Naive thymus-derived CD4-positive, alpha-beta T cell (primary cell): ENCODE measurements at regions of chr1 and their contacts with region 1.

Region 1: DNA sequence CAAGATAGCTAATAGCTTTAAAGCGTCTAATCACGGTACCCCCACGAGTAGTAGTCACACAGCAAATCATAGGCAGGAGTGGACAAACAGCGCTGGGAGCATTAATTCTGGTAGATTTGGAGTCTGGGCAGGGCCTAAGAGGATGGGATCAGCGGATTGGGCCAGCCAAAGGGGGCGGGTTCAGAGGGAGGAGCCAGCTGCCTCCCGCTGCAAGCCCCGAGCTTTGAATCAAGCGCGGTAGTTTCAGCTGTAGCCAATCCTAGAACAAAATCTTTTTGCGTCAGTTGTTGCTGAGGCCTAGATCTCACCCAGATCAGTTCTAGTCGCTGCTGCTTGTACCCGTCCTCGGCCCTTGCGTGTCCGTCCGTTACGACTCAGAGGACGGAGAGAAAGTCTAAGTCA is 576 bp upstream of the NASP start:
- DNase-seq: peak; percentile 77 to 97 (median 95)
- ATAC-seq: peak; percentile 86
- H3K4me3 ChIP-seq: peak overlapping the region; percentile 98
- H3K4me3 Mint-ChIP-seq: peak overlapping the region; percentile 89 to 100 (median 99)
- H3K27ac ChIP-seq: peak overlapping the region; percentile 91
- H3K27ac Mint-ChIP-seq: peak overlapping the region; percentile 91 to 99 (median 98)
- H3K4me1 ChIP-seq: peaks cover 16 to 18% of the 10 kb centered on the region in 2 donors
- H3K4me1 Mint-ChIP-seq: peaks cover 20 to 37% (median 26%) of the 10 kb centered on the region in 7 donors
- H3K27me3 ChIP-seq: no peaks in the 10 kb centered on the region
- H3K27me3 Mint-ChIP-seq: no peaks in the 10 kb centered on the region

Region 2: DNA sequence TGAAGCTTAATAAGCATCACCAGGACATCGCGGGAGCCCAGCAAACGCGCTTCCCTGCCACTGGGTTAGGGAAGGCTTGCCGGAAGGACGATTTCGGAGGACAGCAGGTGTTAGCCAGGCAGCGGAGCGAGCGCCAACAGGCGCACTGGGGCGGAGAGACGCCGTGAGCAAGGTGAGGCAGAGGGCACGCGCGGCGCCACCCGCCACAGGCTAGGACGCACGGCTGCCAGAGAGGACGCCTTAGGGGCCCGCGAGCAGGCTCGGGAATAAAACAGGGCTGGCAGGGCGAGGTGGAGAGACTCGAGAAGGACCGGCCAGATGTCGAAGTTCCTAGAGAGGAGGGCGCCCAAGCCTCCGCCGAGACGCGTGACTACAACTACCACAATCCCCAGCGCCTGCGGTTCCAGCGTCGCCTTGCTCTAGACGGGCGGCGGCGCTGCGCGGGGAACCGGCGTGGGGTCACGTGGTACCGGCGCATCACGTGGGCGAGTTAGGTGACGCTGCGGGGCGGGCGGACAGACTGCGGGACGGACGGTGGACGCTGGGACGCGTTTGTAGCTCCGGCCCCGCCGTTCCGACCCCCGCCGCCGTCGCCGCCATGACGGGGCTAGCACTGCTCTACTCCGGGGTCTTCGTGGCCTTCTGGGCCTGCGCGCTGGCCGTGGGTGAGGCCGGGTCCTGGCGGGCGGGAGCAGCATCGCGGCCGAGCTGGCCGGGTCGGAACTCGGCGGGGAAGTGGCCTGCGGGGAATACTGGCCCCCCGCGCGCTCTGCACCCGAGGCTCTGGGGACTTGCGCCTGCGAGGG is 1608.6 kb before region 1 on chr1 and contains the start of gene ATP6V0B:
- CTCF ChIA-PET with region 1: no interaction called
- POLR2A ChIA-PET with region 1: no interaction called
- intact Hi-C with region 1: loop called in 1 of 2 experiments (anchors 5 kb)
- DNase-seq: peak; percentile 83 to 98 (median 90)
- ATAC-seq: peak; percentile 85
- H3K4me3 ChIP-seq: peak within 1 kb of the TSS; percentile 93
- H3K4me3 Mint-ChIP-seq: peak within 1 kb of the TSS; percentile 88 to 98 (median 94)
- H3K27ac ChIP-seq: peak within 1 kb of the TSS; percentile 91
- H3K27ac Mint-ChIP-seq: peak within 1 kb of the TSS; percentile 90 to 99 (median 94)
- H3K4me1 ChIP-seq: peaks cover 27 to 29% of the 10 kb centered on the region in 2 donors
- H3K4me1 Mint-ChIP-seq: peaks cover 51 to 69% (median 58%) of the 10 kb centered on the region in 7 donors
- H3K27me3 ChIP-seq: no peaks in the 10 kb centered on the region
- H3K27me3 Mint-ChIP-seq: peaks cover 0 to 5% (median 0%) of the 10 kb centered on the region in 5 donors
- total RNA-seq, gene ATP6V0B: 47.3 to 152 (median 69.3) TPM

Region 3: GRCh38 chr1:44472620-44473525 is 1110.4 kb before region 1 on chr1:
- CTCF ChIA-PET with region 1: no interaction called
- POLR2A ChIA-PET with region 1: no interaction called
- intact Hi-C with region 1: no loop called
- DNase-seq: no peak
- ATAC-seq: no peak
- H3K4me3 ChIP-seq: no peak overlapping the region
- H3K4me3 Mint-ChIP-seq: peak overlapping the region in 6 of 10 donors; percentile 13 to 45 (median 40)
- H3K27ac ChIP-seq: no peak overlapping the region
- H3K27ac Mint-ChIP-seq: no peak overlapping the region
- H3K4me1 ChIP-seq: no peaks in the 10 kb centered on the region
- H3K4me1 Mint-ChIP-seq: peaks cover 2 to 14% (median 8%) of the 10 kb centered on the region in 7 donors
- H3K27me3 ChIP-seq: no peaks in the 10 kb centered on the region
- H3K27me3 Mint-ChIP-seq: peaks cover 6 to 23% (median 18%) of the 10 kb centered on the region in 5 donors

Region 4: DNA sequence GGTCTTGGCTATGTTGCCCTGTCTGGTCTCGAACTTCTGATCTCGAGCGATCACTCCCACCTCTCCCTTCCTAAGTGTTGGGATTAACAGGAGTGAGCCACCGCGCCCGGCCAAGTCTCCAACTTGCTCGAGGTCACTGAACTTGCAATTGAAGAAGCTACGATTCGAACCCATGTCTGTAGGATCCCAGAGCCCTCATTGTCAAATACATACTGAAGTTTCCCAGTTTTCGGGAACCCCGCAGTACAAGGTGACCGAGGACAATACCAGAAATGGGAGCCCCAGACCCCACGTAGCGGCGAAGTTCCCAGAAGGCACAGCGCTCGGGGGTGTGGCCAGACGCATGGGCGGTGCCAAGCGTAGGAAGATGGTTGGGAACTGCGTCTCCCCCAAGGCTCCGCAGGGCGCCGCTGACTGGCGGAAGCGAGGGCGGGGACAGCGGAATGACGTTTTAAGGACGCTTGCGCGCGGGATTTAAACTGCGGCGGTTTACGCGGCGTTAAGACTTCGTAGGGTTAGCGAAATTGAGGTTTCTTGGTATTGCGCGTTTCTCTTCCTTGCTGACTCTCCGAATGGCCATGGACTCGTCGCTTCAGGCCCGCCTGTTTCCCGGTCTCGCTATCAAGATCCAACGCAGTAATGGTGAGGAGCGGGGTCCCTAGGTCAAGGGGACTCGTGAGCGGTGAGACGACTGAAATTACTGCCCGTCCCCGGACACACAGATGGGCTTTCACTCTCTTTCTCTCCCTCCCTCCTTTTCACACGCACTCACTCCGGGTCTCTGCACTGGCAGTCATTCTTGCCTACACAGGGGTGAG is 843.7 kb before region 1 on chr1 and contains the start of gene KIF2C:
- CTCF ChIA-PET with region 1: no interaction called
- POLR2A ChIA-PET with region 1: no interaction called
- intact Hi-C with region 1: loop called (anchors 1 to 2 kb)
- DNase-seq: peak; percentile 87 to 96 (median 94)
- ATAC-seq: peak; percentile 100
- H3K4me3 ChIP-seq: peak within 1 kb of the TSS; percentile 79
- H3K4me3 Mint-ChIP-seq: peak within 1 kb of the TSS; percentile 84 to 99 (median 94)
- H3K27ac ChIP-seq: peak within 1 kb of the TSS; percentile 84
- H3K27ac Mint-ChIP-seq: peak within 1 kb of the TSS; percentile 86 to 97 (median 95)
- H3K4me1 ChIP-seq: peaks cover 5 to 7% of the 10 kb centered on the region in 2 donors
- H3K4me1 Mint-ChIP-seq: peaks cover 9 to 39% (median 19%) of the 10 kb centered on the region in 7 donors
- H3K27me3 ChIP-seq: no peaks in the 10 kb centered on the region
- H3K27me3 Mint-ChIP-seq: no peaks in the 10 kb centered on the region
- total RNA-seq, gene KIF2C: 0.32 to 69.3 (median 1.1) TPM

Region 5: GRCh38 chr1:44819608-44820327 is 763.5 kb before region 1 on chr1:
- CTCF ChIA-PET with region 1: no interaction called
- POLR2A ChIA-PET with region 1: no interaction called
- intact Hi-C with region 1: no loop called
- DNase-seq: peak; percentile 75 to 91 (median 86)
- ATAC-seq: peak; percentile 86
- H3K4me3 ChIP-seq: peak overlapping the region; percentile 66
- H3K4me3 Mint-ChIP-seq: peak overlapping the region; percentile 91 to 96 (median 94)
- H3K27ac ChIP-seq: peak overlapping the region; percentile 92
- H3K27ac Mint-ChIP-seq: peak overlapping the region; percentile 99 to 100 (median 100)
- H3K4me1 ChIP-seq: peaks cover 0 to 21% of the 10 kb centered on the region in 2 donors
- H3K4me1 Mint-ChIP-seq: peaks cover 31 to 48% (median 45%) of the 10 kb centered on the region in 7 donors
- H3K27me3 ChIP-seq: no peaks in the 10 kb centered on the region
- H3K27me3 Mint-ChIP-seq: no peaks in the 10 kb centered on the region

Region 6: DNA sequence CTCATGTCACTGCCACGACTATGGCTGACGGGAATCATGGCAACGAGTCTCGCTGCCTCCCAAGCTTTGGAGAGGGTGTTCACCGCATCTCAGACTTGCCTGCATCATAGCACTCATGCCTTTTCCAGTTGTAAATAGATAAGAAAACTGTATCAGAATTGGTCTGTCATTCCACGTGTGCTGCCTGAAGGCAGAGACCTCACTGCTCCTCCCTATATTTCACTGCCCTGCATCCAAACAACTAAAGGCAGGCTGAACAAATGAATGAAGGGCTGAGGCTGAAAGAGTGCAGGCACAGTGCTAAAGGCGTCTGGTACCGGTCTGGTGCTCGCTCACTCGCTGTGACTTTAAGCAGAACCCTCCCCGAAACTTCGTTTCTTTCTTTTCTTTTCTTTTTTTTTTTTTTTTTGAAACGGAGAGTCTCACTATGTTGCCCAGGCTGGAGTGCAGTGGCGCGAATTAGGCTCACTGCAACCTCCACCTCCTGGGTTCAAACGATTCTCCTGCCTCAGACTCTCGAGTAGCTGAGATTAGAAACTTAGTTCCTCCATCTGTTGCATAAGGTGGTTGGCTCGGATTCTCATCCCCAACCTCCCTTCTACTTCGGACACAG is 597.4 kb before region 1 on chr1:
- CTCF ChIA-PET with region 1: no interaction called
- POLR2A ChIA-PET with region 1: interaction called, 3 read pairs
- intact Hi-C with region 1: loop called (anchors 1 to 2 kb)
- DNase-seq: no peak
- ATAC-seq: no peak
- H3K4me3 ChIP-seq: peak overlapping the region; percentile 77
- H3K4me3 Mint-ChIP-seq: peak overlapping the region; percentile 90 to 100 (median 98)
- H3K27ac ChIP-seq: peak overlapping the region; percentile 68
- H3K27ac Mint-ChIP-seq: peak overlapping the region; percentile 75 to 99 (median 92)
- H3K4me1 ChIP-seq: peaks cover 8 to 13% of the 10 kb centered on the region in 2 donors
- H3K4me1 Mint-ChIP-seq: peaks cover 7 to 39% (median 23%) of the 10 kb centered on the region in 7 donors
- H3K27me3 ChIP-seq: no peaks in the 10 kb centered on the region
- H3K27me3 Mint-ChIP-seq: no peaks in the 10 kb centered on the region

Region 7: DNA sequence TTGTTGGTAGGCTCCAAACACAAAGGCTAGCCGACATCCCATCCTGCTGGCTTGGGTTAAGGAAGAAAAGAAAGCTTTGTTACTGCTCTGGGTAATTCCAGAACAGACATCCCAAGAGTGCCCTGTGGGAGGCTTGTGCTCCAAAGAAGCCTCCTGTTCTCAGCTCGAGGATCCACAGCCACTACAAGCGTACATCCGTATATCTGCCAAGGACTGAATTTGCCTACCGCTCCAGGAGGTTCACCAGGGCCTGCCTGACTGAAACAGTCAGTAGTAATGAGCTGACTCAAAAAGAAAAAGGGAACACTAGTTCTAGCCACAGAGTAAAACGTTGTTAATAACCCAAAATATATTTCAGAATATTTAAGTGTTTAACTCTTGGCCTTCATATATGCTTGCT is 218.2 kb before region 1 on chr1:
- CTCF ChIA-PET with region 1: no interaction called
- POLR2A ChIA-PET with region 1: no interaction called
- intact Hi-C with region 1: no loop called
- DNase-seq: no peak
- ATAC-seq: no peak
- H3K4me3 ChIP-seq: no peak overlapping the region
- H3K4me3 Mint-ChIP-seq: no peak overlapping the region
- H3K27ac ChIP-seq: no peak overlapping the region
- H3K27ac Mint-ChIP-seq: no peak overlapping the region
- H3K4me1 ChIP-seq: no peaks in the 10 kb centered on the region
- H3K4me1 Mint-ChIP-seq: peaks cover 0 to 4% (median 2%) of the 10 kb centered on the region in 7 donors
- H3K27me3 ChIP-seq: no peaks in the 10 kb centered on the region
- H3K27me3 Mint-ChIP-seq: no peaks in the 10 kb centered on the region

Region 8: GRCh38 chr1:45490626-45491486 is 92.4 kb before region 1 on chr1 and contains the start of gene TESK2:
- CTCF ChIA-PET with region 1: no interaction called
- POLR2A ChIA-PET with region 1: interaction called, 4 read pairs
- intact Hi-C with region 1: loop called (anchors 1 kb)
- DNase-seq: peak; percentile 89 to 99 (median 98)
- ATAC-seq: peak; percentile 96
- H3K4me3 ChIP-seq: peak within 1 kb of the TSS; percentile 76
- H3K4me3 Mint-ChIP-seq: no peak within 1 kb of the TSS
- H3K27ac ChIP-seq: peak within 1 kb of the TSS; percentile 77
- H3K27ac Mint-ChIP-seq: no peak within 1 kb of the TSS
- H3K4me1 ChIP-seq: peaks cover 9% of the 10 kb centered on the region in 2 donors
- H3K4me1 Mint-ChIP-seq: peaks cover 5 to 15% (median 10%) of the 10 kb centered on the region in 7 donors
- H3K27me3 ChIP-seq: no peaks in the 10 kb centered on the region
- H3K27me3 Mint-ChIP-seq: peaks cover 0 to 4% (median 0%) of the 10 kb centered on the region in 5 donors
- total RNA-seq, gene TESK2: 3.3 to 8.9 (median 7.4) TPM

Region 9: GRCh38 chr1:45550401-45551351 is 32.6 kb before region 1 on chr1 and contains the start of gene AKR1A1:
- CTCF ChIA-PET with region 1: no interaction called
- POLR2A ChIA-PET with region 1: interaction called, 16 read pairs
- intact Hi-C with region 1: loop called (anchors 1 kb)
- DNase-seq: peak; percentile 79 to 91 (median 88)
- ATAC-seq: peak; percentile 98
- H3K4me3 ChIP-seq: peak within 1 kb of the TSS; percentile 93
- H3K4me3 Mint-ChIP-seq: peak within 1 kb of the TSS; percentile 89 to 99 (median 96)
- H3K27ac ChIP-seq: peak within 1 kb of the TSS; percentile 89
- H3K27ac Mint-ChIP-seq: peak within 1 kb of the TSS; percentile 83 to 98 (median 96)
- H3K4me1 ChIP-seq: peaks cover 12 to 22% of the 10 kb centered on the region in 2 donors
- H3K4me1 Mint-ChIP-seq: peaks cover 18 to 28% (median 22%) of the 10 kb centered on the region in 7 donors
- H3K27me3 ChIP-seq: no peaks in the 10 kb centered on the region
- H3K27me3 Mint-ChIP-seq: no peaks in the 10 kb centered on the region
- total RNA-seq, gene AKR1A1: 47.5 to 155 (median 69.3) TPM

Region 10: GRCh38 chr1:45621501-45621836 is 38.2 kb after region 1 on chr1:
- CTCF ChIA-PET with region 1: no interaction called
- POLR2A ChIA-PET with region 1: no interaction called
- intact Hi-C with region 1: no loop called
- DNase-seq: no peak
- ATAC-seq: no peak
- H3K4me3 ChIP-seq: no peak overlapping the region
- H3K4me3 Mint-ChIP-seq: no peak overlapping the region
- H3K27ac ChIP-seq: no peak overlapping the region
- H3K27ac Mint-ChIP-seq: peak overlapping the region in 6 of 9 donors; percentile 8 to 85 (median 76)
- H3K4me1 ChIP-seq: peaks cover 0 to 7% of the 10 kb centered on the region in 2 donors
- H3K4me1 Mint-ChIP-seq: peaks cover 0 to 19% (median 12%) of the 10 kb centered on the region in 7 donors
- H3K27me3 ChIP-seq: no peaks in the 10 kb centered on the region
- H3K27me3 Mint-ChIP-seq: no peaks in the 10 kb centered on the region

Region 11: DNA sequence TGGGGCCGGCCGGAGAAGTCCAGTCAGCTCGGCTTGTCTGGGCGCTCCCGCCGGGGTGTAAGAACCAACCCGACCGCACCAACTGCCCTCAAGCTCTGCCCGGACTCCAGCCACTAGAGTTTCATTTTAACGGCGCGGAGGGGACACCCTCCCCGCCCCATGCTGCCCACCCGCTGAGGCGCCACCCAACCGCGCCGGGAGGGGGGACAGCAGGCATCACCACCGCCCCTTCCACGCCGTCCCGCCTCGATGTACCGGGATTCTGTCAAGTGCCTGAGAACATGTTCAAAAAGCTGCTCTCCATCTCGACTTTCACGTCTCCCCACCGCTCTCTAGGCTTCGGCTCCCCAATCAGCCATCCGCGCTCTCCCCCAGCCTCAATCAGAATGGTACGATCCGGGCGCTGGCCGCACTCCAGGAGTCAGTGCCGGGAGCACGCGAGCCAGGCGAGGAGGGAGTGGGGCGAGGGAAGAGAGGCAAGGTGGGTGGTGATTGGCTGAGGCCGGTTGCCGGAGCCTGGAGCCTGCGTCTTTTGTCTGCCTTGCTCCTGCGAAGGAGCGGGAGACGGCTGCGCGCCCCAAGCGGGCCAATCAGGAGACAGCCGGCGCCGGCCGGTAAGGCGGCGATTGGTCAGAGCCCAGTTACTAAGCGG is 549.4 kb after region 1 on chr1 and contains the start of gene PIK3R3:
- CTCF ChIA-PET with region 1: no interaction called
- POLR2A ChIA-PET with region 1: no interaction called
- intact Hi-C with region 1: loop called in 1 of 2 experiments (anchors 2 kb)
- DNase-seq: peak; percentile 40 to 88 (median 62)
- ATAC-seq: peak; percentile 93
- H3K4me3 ChIP-seq: peak within 1 kb of the TSS; percentile 88
- H3K4me3 Mint-ChIP-seq: peak within 1 kb of the TSS; percentile 89 to 99 (median 97)
- H3K27ac ChIP-seq: peak within 1 kb of the TSS; percentile 46
- H3K27ac Mint-ChIP-seq: peak within 1 kb of the TSS; percentile 23 to 98 (median 65)
- H3K4me1 ChIP-seq: peaks cover 3 to 7% of the 10 kb centered on the region in 2 donors
- H3K4me1 Mint-ChIP-seq: peaks cover 15 to 38% (median 27%) of the 10 kb centered on the region in 7 donors
- H3K27me3 ChIP-seq: peaks cover 4 to 10% of the 10 kb centered on the region in 2 donors
- H3K27me3 Mint-ChIP-seq: peaks cover 43 to 85% (median 66%) of the 10 kb centered on the region in 5 donors
- total RNA-seq, gene PIK3R3: 0.16 to 3.0 (median 0.56) TPM